HAP-1 (cell line): ENCODE measurements at regions of chr7 and their contacts with region 1.

Region 1: GRCh38 chr7:47818796-47819606 is 129.3 kb downstream of the PKD1L1 start:
- DNase-seq: peak; percentile 57 to 82
- H3K4me3 ChIP-seq: no peak overlapping the region
- H3K4me1 ChIP-seq: no peaks in the 10 kb centered on the region
- H3K27me3 ChIP-seq: no peaks in the 10 kb centered on the region

Region 2: DNA sequence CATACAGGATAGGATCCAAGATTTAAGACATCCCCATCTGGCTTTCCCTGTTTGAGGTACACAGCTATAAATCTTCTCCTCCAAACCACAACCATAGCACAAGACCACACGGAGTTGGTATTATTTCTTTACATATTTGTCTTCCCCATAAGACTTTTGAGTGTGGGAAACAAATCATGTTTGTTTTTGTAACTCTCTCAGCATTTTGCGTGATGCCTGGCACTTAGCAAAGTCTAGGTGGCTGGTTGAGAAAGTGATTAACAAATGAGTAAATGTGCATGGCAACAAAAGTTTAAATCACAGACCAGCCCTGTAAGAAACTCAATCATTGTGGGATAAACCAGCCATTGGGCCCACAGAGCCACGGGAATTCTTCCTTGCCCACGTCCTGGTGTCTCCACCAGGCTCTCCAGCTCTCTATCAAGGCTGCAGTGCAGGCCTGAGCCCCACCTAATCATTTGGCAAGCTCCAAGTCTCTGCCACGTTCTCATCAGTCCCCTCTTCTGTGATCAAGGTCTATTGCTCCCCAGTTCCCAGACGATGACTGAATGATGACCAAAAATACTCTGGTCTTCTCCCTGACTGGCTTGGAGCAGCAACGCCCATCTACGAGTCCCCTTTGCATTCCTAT is 554.9 kb before region 1 on chr7:
- in situ Hi-C with region 1: loop called (anchors 5 kb)
- DNase-seq: no peak
- H3K4me3 ChIP-seq: no peak overlapping the region
- H3K4me1 ChIP-seq: peaks cover 2% of the 10 kb centered on the region; the same call in 1 of the 2 replicates
- H3K27me3 ChIP-seq: no peaks in the 10 kb centered on the region

Region 3: GRCh38 chr7:47474937-47475878 is 343.8 kb before region 1 on chr7:
- in situ Hi-C with region 1: loop called (anchors 10 kb)
- DNase-seq: peak; percentile 55 to 82
- H3K4me3 ChIP-seq: no peak overlapping the region
- H3K4me1 ChIP-seq: peaks cover 14% of the 10 kb centered on the region
- H3K27me3 ChIP-seq: no peaks in the 10 kb centered on the region